AG04450 (cell line): ENCODE measurements at regions of chr19 and their contacts with region 1.

Region 1: GRCh38 chr19:16076154-16076957 is at the start of gene TPM4:
- DNase-seq: peak; percentile 93
- H3K4me3 ChIP-seq: peak within 1 kb of the TSS; percentile 89
- H3K27ac ChIP-seq: peak within 1 kb of the TSS; percentile 100
- H3K27me3 ChIP-seq: no peaks in the 10 kb centered on the region
- CTCF ChIP-seq: no peak
- polyA plus RNA-seq, gene TPM4: 1,635 and 2,058 TPM in 2 replicates

Region 2: DNA sequence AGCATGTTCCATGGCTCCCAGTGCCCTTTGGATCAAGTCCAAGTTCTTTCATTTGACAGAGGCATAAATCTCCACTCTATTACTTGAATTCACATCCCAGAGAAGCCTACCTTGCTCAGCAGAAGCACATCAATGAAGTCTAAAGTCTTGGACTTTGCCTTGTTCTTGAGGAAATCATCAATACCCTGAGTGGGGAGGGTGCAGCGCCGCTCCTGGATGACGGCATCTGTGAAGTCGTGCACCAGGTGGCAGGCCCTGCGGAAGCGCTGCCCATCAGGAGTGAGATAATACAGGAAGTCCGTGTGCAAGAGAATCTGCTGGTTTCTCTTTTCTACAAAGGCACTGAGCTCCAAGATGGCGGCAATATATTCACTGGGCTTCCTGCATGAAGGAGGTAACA is 152.7 kb before region 1 on chr19:
- CTCF ChIA-PET with region 1: no interaction called
- POLR2A ChIA-PET with region 1: no interaction called
- DNase-seq: no peak
- H3K4me3 ChIP-seq: no peak overlapping the region
- H3K27ac ChIP-seq: no peak overlapping the region
- H3K27me3 ChIP-seq: no peaks in the 10 kb centered on the region
- CTCF ChIP-seq: no peak

Region 3: DNA sequence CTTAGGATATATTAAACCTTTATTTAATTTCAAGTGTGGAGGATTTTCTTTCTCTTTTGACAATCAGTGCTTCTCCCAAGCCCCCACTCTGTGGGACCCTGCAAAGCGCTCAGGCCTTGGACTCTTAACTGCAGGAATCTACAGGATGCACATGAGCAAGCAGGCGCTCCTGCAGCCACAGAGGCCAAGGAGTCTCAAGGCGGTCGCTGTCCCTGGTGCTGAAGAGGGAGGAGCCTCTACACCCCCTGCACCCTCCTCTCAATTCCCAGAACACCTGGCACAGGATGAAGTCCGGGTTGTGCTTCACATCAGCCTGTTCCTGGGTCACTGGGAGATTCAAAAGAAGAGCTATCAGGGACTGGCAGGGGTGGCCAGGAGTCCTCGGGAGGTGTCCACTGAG is 114.0 kb before region 1 on chr19:
- CTCF ChIA-PET with region 1: no interaction called
- POLR2A ChIA-PET with region 1: no interaction called
- DNase-seq: no peak
- H3K4me3 ChIP-seq: no peak overlapping the region
- H3K27ac ChIP-seq: no peak overlapping the region
- H3K27me3 ChIP-seq: no peaks in the 10 kb centered on the region
- CTCF ChIP-seq: no peak

Region 4: DNA sequence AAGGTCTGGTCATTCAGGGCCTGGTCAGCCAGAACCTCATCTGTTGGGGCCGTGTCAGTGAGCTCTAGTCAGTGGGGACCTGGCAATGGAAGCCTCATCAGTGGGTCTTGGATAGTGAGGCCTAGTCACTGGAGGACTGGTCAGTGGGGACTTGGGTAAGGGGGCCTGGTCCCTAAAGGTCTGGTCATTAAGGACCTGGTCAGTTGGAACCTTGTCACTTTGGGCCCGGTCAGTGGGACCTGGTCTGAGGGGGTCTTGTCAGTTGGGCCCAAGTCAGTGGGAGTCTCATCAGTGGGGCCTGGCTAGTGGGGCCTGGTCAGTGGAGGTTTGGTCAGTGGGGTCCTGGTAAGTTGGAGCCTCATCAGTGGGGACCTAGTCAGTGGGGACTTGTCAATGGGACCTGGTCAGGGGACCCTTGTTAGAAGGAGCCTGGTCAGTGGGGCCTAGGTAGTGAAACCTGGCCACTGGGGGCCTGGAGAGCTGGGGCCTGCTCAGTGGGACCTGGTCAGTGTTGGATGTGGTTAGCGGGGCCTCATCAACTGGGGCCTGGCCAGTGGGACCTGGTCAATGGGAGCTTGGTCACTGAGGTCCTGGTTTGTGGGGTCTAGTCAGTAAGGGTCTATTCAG is 43.7 kb before region 1 on chr19:
- CTCF ChIA-PET with region 1: no interaction called
- POLR2A ChIA-PET with region 1: no interaction called
- DNase-seq: no peak
- H3K4me3 ChIP-seq: no peak overlapping the region
- H3K27ac ChIP-seq: no peak overlapping the region
- H3K27me3 ChIP-seq: no peaks in the 10 kb centered on the region
- CTCF ChIP-seq: no peak

Region 5: GRCh38 chr19:16062789-16063188 is 13.6 kb before region 1 on chr19:
- CTCF ChIA-PET with region 1: interaction called, 11 read pairs
- POLR2A ChIA-PET with region 1: interaction called, 52 read pairs
- DNase-seq: no peak
- H3K4me3 ChIP-seq: no peak overlapping the region
- H3K27ac ChIP-seq: no peak overlapping the region
- H3K27me3 ChIP-seq: no peaks in the 10 kb centered on the region
- CTCF ChIP-seq: peak; percentile 93

Region 6: GRCh38 chr19:16088351-16089009 is 12.1 kb after region 1 on chr19:
- CTCF ChIA-PET with region 1: no interaction called
- POLR2A ChIA-PET with region 1: interaction called, 30 read pairs
- DNase-seq: no peak
- H3K4me3 ChIP-seq: no peak overlapping the region
- H3K27ac ChIP-seq: peak overlapping the region; percentile 31
- H3K27me3 ChIP-seq: no peaks in the 10 kb centered on the region
- CTCF ChIP-seq: peak; percentile 39

Region 7: DNA sequence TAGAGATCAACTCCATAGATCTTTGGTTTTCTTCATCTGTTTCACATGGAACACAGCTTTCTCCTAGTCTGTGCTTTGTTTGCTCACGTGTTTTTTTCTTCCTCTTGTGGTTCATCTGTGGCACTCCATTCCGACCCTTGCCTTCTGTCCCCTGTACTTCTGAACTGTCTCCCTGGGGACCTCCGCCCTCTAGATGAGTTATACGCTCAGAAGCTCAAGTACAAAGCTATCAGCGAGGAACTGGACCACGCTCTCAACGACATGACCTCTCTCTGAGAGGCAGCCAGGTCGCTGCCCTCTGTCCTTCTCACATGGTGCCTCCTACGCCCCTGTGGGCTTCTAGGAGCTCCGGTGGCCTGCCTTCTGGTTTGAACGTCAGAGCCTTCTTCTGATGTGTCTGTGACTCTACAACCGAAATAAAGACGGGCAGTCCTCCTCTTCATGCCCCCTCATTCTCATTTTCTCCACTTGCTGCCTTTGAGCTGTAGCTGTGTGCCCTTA is 18.8 kb after region 1 on chr19:
- CTCF ChIA-PET with region 1: no interaction called
- POLR2A ChIA-PET with region 1: interaction called, 11 read pairs
- DNase-seq: no peak
- H3K4me3 ChIP-seq: no peak overlapping the region
- H3K27ac ChIP-seq: peak overlapping the region; percentile 65
- H3K27me3 ChIP-seq: no peaks in the 10 kb centered on the region
- CTCF ChIP-seq: no peak